CD8-positive, alpha-beta memory T cell (primary cell): ENCODE measurements at regions of chr6 and their contacts with region 1.

Region 1: GRCh38 chr6:31729515-31729978 is 448 bp upstream of the DDAH2 start:
- DNase-seq: peak; percentile 72 to 85 (median 72)
- H3K4me3 ChIP-seq: peak overlapping the region; percentile 81
- H3K4me3 Mint-ChIP-seq: peak overlapping the region; percentile 89 to 99 (median 95)
- H3K27ac ChIP-seq: peak overlapping the region; percentile 64
- H3K27ac Mint-ChIP-seq: peak overlapping the region; percentile 80 to 96 (median 94)
- H3K4me1 ChIP-seq: peaks cover 48% of the 10 kb centered on the region
- H3K4me1 Mint-ChIP-seq: peaks cover 37 to 48% (median 44%) of the 10 kb centered on the region in 3 donors
- H3K27me3 ChIP-seq: no peaks in the 10 kb centered on the region
- H3K27me3 Mint-ChIP-seq: no peaks in the 10 kb centered on the region

Region 2: DNA sequence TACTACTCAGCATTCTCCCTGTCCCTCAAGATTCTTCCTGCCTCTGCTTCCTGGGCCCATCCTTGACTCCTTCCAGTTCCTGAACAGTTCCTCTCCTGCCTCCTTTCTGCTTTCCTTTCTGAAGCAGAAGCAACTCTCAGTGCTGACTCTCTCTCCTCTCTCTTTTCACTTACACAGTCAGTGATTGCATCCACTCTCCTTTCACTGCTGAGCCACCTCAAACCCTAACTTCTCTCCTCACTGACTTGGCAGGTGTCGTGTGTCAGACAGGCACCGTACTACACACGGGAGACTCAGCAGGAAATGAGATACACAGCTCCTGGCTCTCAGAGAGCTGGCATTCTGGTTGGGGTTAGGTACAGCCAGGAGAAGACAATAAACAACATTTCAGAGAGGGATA is 32.0 kb before region 1 on chr6:
- CTCF ChIA-PET with region 1: no interaction called
- POLR2A ChIA-PET with region 1: no interaction called
- DNase-seq: no peak
- H3K4me3 ChIP-seq: no peak overlapping the region
- H3K4me3 Mint-ChIP-seq: no peak overlapping the region
- H3K27ac ChIP-seq: no peak overlapping the region
- H3K27ac Mint-ChIP-seq: peak overlapping the region in 7 of 8 donors; percentile 42 to 82 (median 66)
- H3K4me1 ChIP-seq: peaks cover 16% of the 10 kb centered on the region
- H3K4me1 Mint-ChIP-seq: peaks cover 32 to 36% (median 35%) of the 10 kb centered on the region in 3 donors
- H3K27me3 ChIP-seq: no peaks in the 10 kb centered on the region
- H3K27me3 Mint-ChIP-seq: peaks cover 0 to 2% of the 10 kb centered on the region in 2 donors

Region 3: GRCh38 chr6:31739639-31740396 is 10.3 kb after region 1 on chr6 and contains the start of gene MSH5:
- CTCF ChIA-PET with region 1: interaction called, 32 read pairs
- POLR2A ChIA-PET with region 1: interaction called, 6 read pairs
- DNase-seq: peak; percentile 91 to 97 (median 93)
- H3K4me3 ChIP-seq: peak within 1 kb of the TSS; percentile 84
- H3K4me3 Mint-ChIP-seq: peak within 1 kb of the TSS; percentile 93 to 99 (median 98)
- H3K27ac ChIP-seq: peak within 1 kb of the TSS; percentile 98
- H3K27ac Mint-ChIP-seq: peak within 1 kb of the TSS; percentile 91 to 99 (median 96)
- H3K4me1 ChIP-seq: peaks cover 40% of the 10 kb centered on the region
- H3K4me1 Mint-ChIP-seq: peaks cover 46 to 62% (median 55%) of the 10 kb centered on the region in 3 donors
- H3K27me3 ChIP-seq: no peaks in the 10 kb centered on the region
- H3K27me3 Mint-ChIP-seq: no peaks in the 10 kb centered on the region
- total RNA-seq, gene MSH5: 36.4 to 39.8 TPM

Region 4: DNA sequence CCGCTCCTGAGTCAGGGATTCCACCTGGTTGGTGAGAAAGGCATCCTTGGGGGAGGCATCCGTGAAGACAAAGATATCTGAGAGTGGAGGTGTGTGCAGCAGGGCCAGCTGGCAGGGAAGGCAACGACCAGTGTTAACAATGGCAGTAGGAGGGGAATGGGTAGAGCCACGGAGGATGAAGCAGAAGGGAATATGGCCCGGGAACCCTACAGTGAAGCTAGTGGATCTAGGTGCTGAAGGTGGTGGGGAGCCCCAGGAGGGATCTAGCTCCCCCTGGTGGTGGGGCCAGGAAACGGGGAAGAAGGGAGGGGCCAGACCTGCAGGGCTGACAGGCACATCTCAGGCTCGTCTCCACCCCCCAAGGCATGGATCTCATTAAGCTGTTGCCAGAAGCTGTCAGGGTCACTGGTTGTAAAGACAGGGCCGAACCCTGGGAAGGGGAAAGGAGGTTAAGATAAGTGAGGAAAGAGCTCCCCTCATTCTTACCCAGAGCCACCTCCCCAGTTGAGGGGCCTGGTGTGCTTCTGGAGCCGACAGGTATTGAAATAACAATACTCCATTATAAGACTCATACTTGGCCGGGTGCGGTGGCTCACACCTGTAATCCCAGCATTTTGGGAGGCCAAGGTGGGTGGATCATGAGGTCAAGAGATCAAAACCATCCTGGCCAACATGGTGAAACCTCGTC is 40.3 kb after region 1 on chr6:
- CTCF ChIA-PET with region 1: interaction called, 15 read pairs
- POLR2A ChIA-PET with region 1: interaction called, 3 read pairs
- DNase-seq: peak; percentile 69 to 85 (median 74)
- H3K4me3 ChIP-seq: no peak overlapping the region
- H3K4me3 Mint-ChIP-seq: peak overlapping the region in 1 of 7 donors; percentile 63
- H3K27ac ChIP-seq: no peak overlapping the region
- H3K27ac Mint-ChIP-seq: peak overlapping the region in 6 of 8 donors; percentile 4 to 82 (median 67)
- H3K4me1 ChIP-seq: peaks cover 33% of the 10 kb centered on the region
- H3K4me1 Mint-ChIP-seq: peaks cover 22 to 29% (median 27%) of the 10 kb centered on the region in 3 donors
- H3K27me3 ChIP-seq: no peaks in the 10 kb centered on the region
- H3K27me3 Mint-ChIP-seq: no peaks in the 10 kb centered on the region

Region 5: GRCh38 chr6:31795616-31796298 is 66.2 kb after region 1 on chr6 and contains the start of gene VARS1:
- CTCF ChIA-PET with region 1: interaction called, 10 read pairs
- POLR2A ChIA-PET with region 1: interaction called, 4 read pairs
- DNase-seq: peak; percentile 77 to 90 (median 84)
- H3K4me3 ChIP-seq: peak within 1 kb of the TSS; percentile 82
- H3K4me3 Mint-ChIP-seq: peak within 1 kb of the TSS; percentile 89 to 99 (median 94)
- H3K27ac ChIP-seq: peak within 1 kb of the TSS; percentile 87
- H3K27ac Mint-ChIP-seq: peak within 1 kb of the TSS; percentile 85 to 99 (median 98)
- H3K4me1 ChIP-seq: peaks cover 46% of the 10 kb centered on the region
- H3K4me1 Mint-ChIP-seq: peaks cover 34 to 59% (median 40%) of the 10 kb centered on the region in 3 donors
- H3K27me3 ChIP-seq: no peaks in the 10 kb centered on the region
- H3K27me3 Mint-ChIP-seq: no peaks in the 10 kb centered on the region
- total RNA-seq, gene VARS1: 179 to 180 TPM

Region 6: DNA sequence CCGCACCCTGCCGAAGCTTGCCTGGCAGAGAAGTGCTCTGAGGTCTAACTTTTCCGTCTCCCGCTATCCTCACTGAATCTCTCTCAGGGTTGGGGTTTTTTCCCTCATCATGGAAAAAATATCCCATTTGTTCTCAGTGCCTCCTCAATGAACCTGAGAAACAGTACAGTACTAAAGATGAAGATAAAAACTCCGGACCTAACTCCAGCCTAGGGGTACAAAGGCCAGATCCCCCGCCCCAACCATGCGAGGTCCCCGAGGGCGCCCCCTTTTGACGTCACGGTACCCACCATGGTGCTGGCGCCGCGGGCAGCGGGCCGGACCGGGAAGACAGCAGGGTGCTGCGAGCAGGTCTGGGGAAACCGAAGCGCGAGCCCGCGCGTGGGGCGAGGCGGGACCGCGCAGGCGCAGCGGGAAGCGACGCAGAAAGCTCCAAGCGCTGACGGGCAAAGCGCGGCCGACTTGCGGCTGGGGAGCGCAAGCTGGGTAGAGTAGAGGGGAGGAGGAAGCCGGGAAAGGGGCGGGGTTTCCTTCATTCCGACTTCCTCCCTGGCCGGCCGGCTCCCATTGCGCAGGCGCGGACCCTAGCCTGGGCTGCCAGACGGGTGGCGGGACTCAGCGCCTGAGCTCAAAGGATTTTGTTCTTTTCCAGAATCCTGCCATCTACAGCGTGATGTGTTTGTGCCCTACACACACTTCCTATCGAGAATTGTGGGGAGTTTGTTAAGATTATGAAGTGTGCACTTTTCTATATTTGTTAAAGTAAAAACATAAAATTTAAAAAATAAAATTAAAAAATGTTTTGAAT is 77.1 kb after region 1 on chr6 and contains the start of gene LSM2:
- CTCF ChIA-PET with region 1: interaction called, 15 read pairs
- POLR2A ChIA-PET with region 1: interaction called, 5 read pairs
- DNase-seq: peak; percentile 95 to 98 (median 97)
- H3K4me3 ChIP-seq: peak within 1 kb of the TSS; percentile 95
- H3K4me3 Mint-ChIP-seq: peak within 1 kb of the TSS; percentile 83 to 94 (median 91)
- H3K27ac ChIP-seq: peak within 1 kb of the TSS; percentile 93
- H3K27ac Mint-ChIP-seq: peak within 1 kb of the TSS; percentile 85 to 97 (median 94)
- H3K4me1 ChIP-seq: peaks cover 12% of the 10 kb centered on the region
- H3K4me1 Mint-ChIP-seq: peaks cover 17 to 45% (median 28%) of the 10 kb centered on the region in 3 donors
- H3K27me3 ChIP-seq: no peaks in the 10 kb centered on the region
- H3K27me3 Mint-ChIP-seq: no peaks in the 10 kb centered on the region
- total RNA-seq, gene LSM2: 160 to 172 TPM

Region 7: DNA sequence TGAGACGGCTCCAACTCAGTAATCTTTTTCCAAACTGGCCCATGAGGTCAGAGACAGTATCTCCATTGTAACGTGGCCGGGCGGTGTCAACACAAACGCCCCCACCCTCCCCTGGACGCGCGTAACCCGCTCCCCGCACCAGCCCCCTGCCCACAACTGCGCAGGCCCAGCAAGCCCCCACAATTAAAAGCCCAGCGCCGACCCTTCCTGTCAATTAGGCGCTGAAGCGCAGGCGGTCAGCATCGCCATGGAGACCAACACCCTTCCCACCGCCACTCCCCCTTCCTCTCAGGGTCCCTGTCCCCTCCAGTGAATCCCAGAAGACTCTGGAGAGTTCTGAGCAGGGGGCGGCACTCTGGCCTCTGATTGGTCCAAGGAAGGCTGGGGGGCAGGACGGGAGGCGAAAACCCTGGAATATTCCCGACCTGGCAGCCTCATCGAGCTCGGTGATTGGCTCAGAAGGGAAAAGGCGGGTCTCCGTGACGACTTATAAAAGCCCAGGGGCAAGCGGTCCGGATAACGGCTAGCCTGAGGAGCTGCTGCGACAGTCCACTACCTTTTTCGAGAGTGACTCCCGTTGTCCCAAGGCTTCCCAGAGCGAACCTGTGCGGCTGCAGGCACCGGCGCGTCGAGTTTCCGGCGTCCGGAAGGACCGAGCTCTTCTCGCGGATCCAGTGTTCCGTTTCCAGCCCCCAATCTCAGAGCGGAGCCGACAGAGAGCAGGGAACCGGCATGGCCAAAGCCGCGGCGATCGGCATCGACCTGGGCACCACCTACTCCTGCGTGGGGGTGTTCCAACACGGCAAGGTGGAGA is 85.7 kb after region 1 on chr6 and contains the starts of genes HSPA1A and HSPA1L:
- CTCF ChIA-PET with region 1: interaction called, 11 read pairs
- POLR2A ChIA-PET with region 1: interaction called, 3 read pairs
- DNase-seq: peak; percentile 35 to 70 (median 49)
- H3K4me3 ChIP-seq: peak within 1 kb of the TSS; percentile 70
- H3K4me3 Mint-ChIP-seq: peak within 1 kb of the TSS; percentile 93 to 99 (median 96)
- H3K27ac ChIP-seq: peak within 1 kb of the TSS; percentile 88
- H3K27ac Mint-ChIP-seq: peak within 1 kb of the TSS; percentile 89 to 97 (median 94)
- H3K4me1 ChIP-seq: peaks cover 36% of the 10 kb centered on the region
- H3K4me1 Mint-ChIP-seq: peaks cover 41 to 58% (median 52%) of the 10 kb centered on the region in 3 donors
- H3K27me3 ChIP-seq: no peaks in the 10 kb centered on the region
- H3K27me3 Mint-ChIP-seq: no peaks in the 10 kb centered on the region
- total RNA-seq, gene HSPA1A: 64.8 to 70.1 TPM
- total RNA-seq, gene HSPA1L: 3.5 to 3.8 TPM

Region 8: DNA sequence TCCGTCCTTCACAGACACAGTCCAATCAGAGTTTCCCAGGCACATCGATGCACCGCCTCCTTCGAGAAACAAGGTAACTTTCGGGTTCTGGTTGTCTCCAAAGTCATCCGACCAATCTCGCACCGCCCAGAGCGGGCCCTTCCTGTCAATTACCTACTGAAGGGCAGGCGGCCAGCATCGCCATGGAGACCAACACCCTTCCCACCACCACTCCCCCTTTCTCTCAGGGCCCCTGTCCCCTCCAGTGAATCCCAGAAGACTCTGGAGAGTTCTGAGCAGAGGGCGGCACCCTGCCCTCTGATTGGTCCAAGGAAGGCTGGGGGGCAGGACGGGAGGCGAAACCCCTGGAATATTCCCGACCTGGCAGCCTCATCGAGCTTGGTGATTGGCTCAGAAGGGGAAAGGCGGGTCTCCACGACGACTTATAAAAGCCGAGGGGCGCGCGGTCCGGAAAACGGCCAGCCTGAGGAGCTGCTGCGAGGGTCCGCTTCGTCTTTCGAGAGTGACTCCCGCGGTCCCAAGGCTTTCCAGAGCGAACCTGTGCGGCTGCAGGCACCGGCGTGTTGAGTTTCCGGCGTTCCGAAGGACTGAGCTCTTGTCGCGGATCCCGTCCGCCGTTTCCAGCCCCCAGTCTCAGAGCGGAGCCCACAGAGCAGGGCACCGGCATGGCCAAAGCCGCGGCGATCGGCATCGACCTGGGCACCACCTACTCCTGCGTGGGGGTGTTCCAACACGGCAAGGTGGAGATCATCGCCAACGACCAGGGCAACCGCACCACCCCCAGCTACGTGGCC is 97.9 kb after region 1 on chr6 and contains the start of gene HSPA1B:
- CTCF ChIA-PET with region 1: interaction called, 71 read pairs
- POLR2A ChIA-PET with region 1: interaction called, 8 read pairs
- DNase-seq: peak; percentile 69 to 92 (median 81)
- H3K4me3 ChIP-seq: peak within 1 kb of the TSS; percentile 71
- H3K4me3 Mint-ChIP-seq: peak within 1 kb of the TSS; percentile 87 to 99 (median 96)
- H3K27ac ChIP-seq: peak within 1 kb of the TSS; percentile 89
- H3K27ac Mint-ChIP-seq: peak within 1 kb of the TSS; percentile 94 to 99 (median 96)
- H3K4me1 ChIP-seq: peaks cover 27% of the 10 kb centered on the region
- H3K4me1 Mint-ChIP-seq: peaks cover 41 to 54% (median 43%) of the 10 kb centered on the region in 3 donors
- H3K27me3 ChIP-seq: no peaks in the 10 kb centered on the region
- H3K27me3 Mint-ChIP-seq: peaks cover 0 to 4% of the 10 kb centered on the region in 2 donors
- total RNA-seq, gene HSPA1B: 80.9 to 81.4 TPM